Keratinocyte (primary cell): ENCODE measurements at regions of chr4 and their contacts with region 1.

Region 1: GRCh38 chr4:1410491-1411325 is 4.5 kb upstream of the NKX1-1 start:
- DNase-seq: no peak
- H3K4me3 ChIP-seq: no peak overlapping the region
- H3K27ac ChIP-seq: no peak overlapping the region
- H3K4me1 ChIP-seq: no peaks in the 10 kb centered on the region
- H3K27me3 ChIP-seq: peaks cover 75% of the 10 kb centered on the region
- CTCF ChIP-seq: no peak

Region 2: DNA sequence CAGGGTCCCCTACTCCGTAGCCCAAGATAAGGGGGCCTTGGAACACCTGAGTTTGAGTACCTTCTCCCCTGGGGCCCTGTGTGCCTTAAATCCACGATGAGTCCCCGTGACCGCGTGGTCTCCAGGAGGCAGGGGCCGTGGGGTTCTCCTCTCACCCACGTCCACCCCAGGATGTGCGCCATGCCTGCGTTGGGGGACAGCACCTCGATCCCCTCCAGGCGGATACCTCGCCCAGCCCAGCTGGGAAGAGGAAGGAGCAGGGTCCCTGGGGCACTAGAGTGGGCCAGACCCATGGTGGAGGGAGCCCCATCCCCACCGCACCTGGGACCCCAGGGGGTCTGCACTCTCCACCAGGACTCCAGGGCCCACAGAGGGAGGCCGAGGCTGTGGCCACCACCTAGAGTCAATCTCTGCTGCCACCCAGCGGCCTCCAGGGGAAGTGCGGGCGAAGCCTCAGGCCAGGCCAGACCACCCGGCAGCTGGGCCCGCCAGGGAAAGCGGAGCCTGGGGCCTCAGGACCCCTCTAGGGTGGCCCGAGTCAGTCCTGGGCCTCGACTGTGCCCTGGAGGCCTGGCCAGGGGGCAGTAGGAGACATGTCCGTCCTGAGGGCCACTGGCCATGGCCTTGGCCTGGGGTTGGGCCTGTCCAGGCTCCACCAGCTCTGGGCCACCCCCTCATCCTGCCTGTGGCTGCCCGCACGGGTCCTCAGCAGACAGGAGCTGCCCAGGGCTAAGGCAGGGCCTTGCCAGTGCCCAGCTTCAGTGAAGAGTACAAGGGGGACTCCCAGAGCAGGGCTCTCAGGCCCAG is 218.4 kb after region 1 on chr4:
- dilution Hi-C with region 1: loop called (anchors 25 kb)
- DNase-seq: no peak
- H3K4me3 ChIP-seq: no peak overlapping the region
- H3K27ac ChIP-seq: no peak overlapping the region
- H3K4me1 ChIP-seq: no peaks in the 10 kb centered on the region
- H3K27me3 ChIP-seq: no peaks in the 10 kb centered on the region
- CTCF ChIP-seq: peak; percentile 85 to 99 (median 90)

Region 3: DNA sequence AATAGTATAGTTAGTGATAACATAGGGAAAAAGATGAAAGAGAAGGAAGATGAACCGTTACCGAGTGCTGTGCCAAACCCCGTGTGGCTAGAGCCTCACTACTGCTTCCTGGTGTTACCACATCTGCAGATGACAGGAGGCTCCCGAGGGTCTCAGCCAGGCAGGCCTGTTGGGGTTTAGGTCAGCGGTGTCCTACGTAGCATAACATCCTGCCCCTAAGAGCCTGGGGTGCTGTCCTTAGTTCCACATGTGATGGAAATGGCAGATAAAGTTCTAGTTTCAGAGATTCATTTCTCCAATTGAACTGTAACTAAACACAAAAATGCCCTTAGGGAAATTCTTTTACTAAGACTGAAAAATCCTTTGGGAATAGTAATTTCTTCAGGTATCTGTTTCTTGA is 1242.1 kb after region 1 on chr4:
- dilution Hi-C with region 1: no loop called
- DNase-seq: no peak
- H3K4me3 ChIP-seq: no peak overlapping the region
- H3K27ac ChIP-seq: no peak overlapping the region
- H3K4me1 ChIP-seq: no peaks in the 10 kb centered on the region
- H3K27me3 ChIP-seq: no peaks in the 10 kb centered on the region
- CTCF ChIP-seq: no peak